AG04450 (cell line): ENCODE measurements at regions of chr6 and their contacts with region 1.

Region 1: GRCh38 chr6:43774776-43775534 is 4.9 kb downstream of the VEGFA start:
- DNase-seq: no peak
- H3K4me3 ChIP-seq: peak overlapping the region; percentile 96
- H3K27ac ChIP-seq: peak overlapping the region; percentile 39
- H3K27me3 ChIP-seq: no peaks in the 10 kb centered on the region
- CTCF ChIP-seq: peak; percentile 94

Region 2: GRCh38 chr6:43639984-43640800 is 134.8 kb before region 1 on chr6:
- CTCF ChIA-PET with region 1: no interaction called
- POLR2A ChIA-PET with region 1: no interaction called
- DNase-seq: no peak
- H3K4me3 ChIP-seq: no peak overlapping the region
- H3K27ac ChIP-seq: no peak overlapping the region
- H3K27me3 ChIP-seq: no peaks in the 10 kb centered on the region
- CTCF ChIP-seq: no peak

Region 3: DNA sequence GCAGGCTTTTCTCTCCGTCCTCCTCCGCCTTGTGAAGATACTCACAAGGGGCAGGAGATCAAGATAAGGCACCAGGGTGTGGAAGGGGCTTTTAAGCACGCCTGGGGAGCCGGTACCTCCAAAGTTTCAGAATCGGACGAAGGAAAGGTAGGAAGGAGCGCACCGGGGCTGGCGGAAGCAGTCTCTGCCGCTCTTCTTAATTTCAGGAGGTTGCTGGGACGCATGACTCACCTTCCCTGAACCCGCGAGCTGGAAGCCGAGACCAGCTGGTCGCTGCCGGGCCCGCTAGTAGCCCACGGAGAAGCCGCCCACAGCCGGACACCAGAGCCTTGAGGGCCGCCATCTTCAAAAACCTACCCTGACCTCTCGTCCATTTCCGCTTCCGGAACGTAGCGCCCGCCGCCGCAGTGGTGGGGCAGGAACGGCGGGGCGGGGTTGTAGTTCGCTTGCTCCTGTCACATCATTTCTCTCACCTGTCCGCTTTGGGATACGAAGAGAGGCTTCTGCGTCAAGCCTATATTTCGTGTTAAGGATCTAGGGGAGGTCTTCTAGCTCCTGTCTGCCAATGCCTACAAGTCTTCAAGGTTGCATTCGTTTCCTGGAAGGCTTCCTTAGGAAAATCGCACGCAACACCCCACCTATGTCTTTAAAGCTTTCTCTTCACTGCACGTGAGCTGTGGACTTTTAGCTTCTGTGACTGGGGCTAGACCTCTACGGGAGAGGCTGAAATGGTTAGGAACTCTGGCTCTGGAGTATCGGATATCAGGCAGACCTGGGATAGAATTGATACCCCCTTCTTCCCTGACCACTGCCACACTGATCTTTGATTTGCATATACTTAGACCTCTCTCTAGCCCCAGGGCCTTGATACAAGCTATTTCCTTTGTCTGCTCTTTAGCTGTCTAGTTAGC is 87.3 kb before region 1 on chr6 and contains the start of gene MRPS18A:
- CTCF ChIA-PET with region 1: interaction called, 14 read pairs
- POLR2A ChIA-PET with region 1: no interaction called
- DNase-seq: no peak
- H3K4me3 ChIP-seq: peak within 1 kb of the TSS; percentile 93
- H3K27ac ChIP-seq: peak within 1 kb of the TSS; percentile 92
- H3K27me3 ChIP-seq: no peaks in the 10 kb centered on the region
- CTCF ChIP-seq: no peak
- polyA plus RNA-seq, gene MRPS18A: 41.0 and 59.7 TPM in 2 replicates

Region 4: DNA sequence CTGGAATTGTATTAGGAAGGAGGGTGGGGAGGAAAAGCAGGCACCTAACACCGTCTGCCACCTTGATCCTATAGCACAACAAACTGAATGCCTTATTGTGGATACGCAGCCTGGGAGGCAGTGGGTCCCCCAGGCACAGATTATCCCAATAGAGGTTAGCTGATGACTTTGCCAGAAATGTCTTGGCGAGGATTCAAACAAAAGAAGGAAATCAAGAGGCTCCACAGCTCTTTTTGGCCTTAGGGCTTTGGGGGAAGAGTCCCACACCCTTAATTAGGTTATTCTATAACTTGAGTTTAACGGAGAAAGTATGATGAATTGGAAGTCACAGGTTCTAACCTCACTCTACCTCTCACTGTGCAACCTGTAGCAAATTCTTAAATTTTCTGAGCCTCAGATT is 250.3 kb after region 1 on chr6:
- CTCF ChIA-PET with region 1: interaction called, 10 read pairs
- POLR2A ChIA-PET with region 1: no interaction called
- DNase-seq: no peak
- H3K4me3 ChIP-seq: no peak overlapping the region
- H3K27ac ChIP-seq: no peak overlapping the region
- H3K27me3 ChIP-seq: no peaks in the 10 kb centered on the region
- CTCF ChIP-seq: no peak